Activated B cell treated with CpG ODN at 0.5 μM for 24 hours (primary cell): ENCODE measurements at regions of chr12 and their contacts with region 1.

Region 1: DNA sequence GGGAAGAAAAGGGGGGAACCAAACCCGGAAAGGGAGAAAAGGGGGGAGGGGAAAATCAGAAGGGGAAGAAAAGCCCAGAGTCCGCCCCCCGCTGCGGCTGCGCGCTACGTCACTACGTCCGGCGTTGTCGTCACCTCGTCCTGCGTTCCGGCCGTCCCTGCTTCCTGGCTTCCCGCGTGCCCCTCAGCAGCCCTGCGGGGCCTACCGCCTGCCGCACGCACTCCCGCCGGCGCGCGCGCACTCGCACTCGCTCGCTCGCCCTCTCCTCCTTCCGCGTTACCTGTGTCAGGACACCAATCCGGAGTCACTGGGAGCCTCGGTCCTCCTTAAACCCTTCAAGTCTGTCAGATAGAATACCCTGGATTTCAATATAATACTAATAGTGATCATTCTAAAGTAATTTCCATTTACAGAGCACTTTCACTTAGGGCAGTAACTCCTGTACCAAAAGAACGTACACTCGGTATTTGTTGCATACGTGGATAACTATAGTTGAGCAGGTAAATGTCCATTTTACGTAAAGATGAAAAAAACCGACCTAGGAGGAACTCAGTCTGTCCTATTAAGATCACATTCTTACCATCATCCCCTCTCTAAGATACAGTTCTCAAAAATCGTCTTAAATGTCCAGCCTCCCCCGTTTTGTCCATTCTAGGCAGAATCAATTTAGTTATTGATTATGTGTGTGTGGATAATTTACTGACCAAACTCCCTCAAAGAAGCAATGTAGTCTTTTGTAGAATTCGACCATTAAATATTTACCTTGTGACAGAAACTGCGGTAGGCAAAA is at the start of gene R3HDM2:
- DNase-seq: peak; percentile 94
- ATAC-seq: peak; percentile 91
- H3K4me3 Mint-ChIP-seq: peak within 1 kb of the TSS; percentile 97
- H3K27ac Mint-ChIP-seq: peak within 1 kb of the TSS; percentile 99
- H3K4me1 Mint-ChIP-seq: peaks cover 39% of the 10 kb centered on the region
- H3K27me3 Mint-ChIP-seq: no peaks in the 10 kb centered on the region
- CTCF ChIP-seq: no peak
- total RNA-seq, gene R3HDM2: 74.2 and 75.6 TPM in 2 replicates

Region 2: GRCh38 chr12:56488041-56488955 is 942.8 kb before region 1 on chr12 and contains the start of gene GLS2:
- CTCF ChIA-PET with region 1: no interaction called
- POLR2A ChIA-PET with region 1: no interaction called
- intact Hi-C with region 1: no loop called
- DNase-seq: peak; percentile 67
- ATAC-seq: peak; percentile 99
- H3K4me3 Mint-ChIP-seq: peak within 1 kb of the TSS; percentile 92
- H3K27ac Mint-ChIP-seq: peak within 1 kb of the TSS; percentile 81
- H3K4me1 Mint-ChIP-seq: peaks cover 17% of the 10 kb centered on the region
- H3K27me3 Mint-ChIP-seq: peaks cover 13% of the 10 kb centered on the region
- CTCF ChIP-seq: no peak
- total RNA-seq, gene GLS2: 2.6 and 3.5 TPM in 2 replicates

Region 3: GRCh38 chr12:57088459-57089248 is 342.5 kb before region 1 on chr12 and contains the start of gene NAB2:
- CTCF ChIA-PET with region 1: no interaction called
- POLR2A ChIA-PET with region 1: no interaction called
- intact Hi-C with region 1: loop called (anchors 2 kb)
- DNase-seq: peak; percentile 89
- ATAC-seq: peak; percentile 66
- H3K4me3 Mint-ChIP-seq: peak within 1 kb of the TSS; percentile 91
- H3K27ac Mint-ChIP-seq: peak within 1 kb of the TSS; percentile 96
- H3K4me1 Mint-ChIP-seq: peaks cover 55% of the 10 kb centered on the region
- H3K27me3 Mint-ChIP-seq: no peaks in the 10 kb centered on the region
- CTCF ChIP-seq: no peak
- total RNA-seq, gene NAB2: 20.4 and 22.1 TPM in 2 replicates

Region 4: DNA sequence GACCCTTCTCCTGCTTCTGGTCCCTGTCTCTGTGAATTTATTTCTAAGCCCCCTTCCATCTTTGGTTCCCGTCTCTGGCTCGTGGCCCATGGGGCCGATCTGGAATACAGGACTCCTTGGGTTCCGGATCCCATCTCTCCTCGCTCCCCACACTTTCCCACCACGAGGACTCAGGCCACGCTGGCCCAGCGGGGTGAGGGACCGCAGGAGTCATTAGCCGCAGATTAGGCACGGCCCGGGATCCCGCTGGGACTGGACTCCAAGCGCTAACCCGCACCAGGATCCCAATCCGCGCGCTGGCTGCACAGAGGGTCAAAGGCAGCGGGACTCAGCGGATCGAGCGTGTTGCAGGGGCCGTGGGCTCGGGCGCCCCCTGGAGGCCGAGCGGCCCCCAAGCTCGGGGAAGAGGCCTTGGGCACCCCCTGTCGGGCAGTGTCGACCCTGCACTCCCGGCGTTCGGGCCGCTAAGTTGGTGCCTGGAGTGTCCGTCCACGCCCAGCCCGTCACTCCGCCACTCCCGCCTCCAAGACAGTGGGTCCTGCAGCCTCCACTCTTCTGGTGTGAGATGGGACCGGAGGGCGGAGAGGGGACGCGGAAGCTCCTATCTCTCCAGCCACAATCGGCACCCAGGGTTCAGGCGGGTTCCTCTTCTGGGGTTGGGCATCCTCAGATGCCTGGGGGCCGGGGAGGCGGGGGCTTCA is 192.1 kb before region 1 on chr12:
- CTCF ChIA-PET with region 1: no interaction called
- POLR2A ChIA-PET with region 1: no interaction called
- intact Hi-C with region 1: loop called (anchors 1 kb)
- DNase-seq: peak; percentile 96
- ATAC-seq: peak; percentile 54
- H3K4me3 Mint-ChIP-seq: peak overlapping the region; percentile 89
- H3K27ac Mint-ChIP-seq: peak overlapping the region; percentile 90
- H3K4me1 Mint-ChIP-seq: peaks cover 94% of the 10 kb centered on the region
- H3K27me3 Mint-ChIP-seq: peaks cover 8% of the 10 kb centered on the region
- CTCF ChIP-seq: peak; percentile 99

Region 5: GRCh38 chr12:57280211-57281062 is 150.7 kb before region 1 on chr12:
- CTCF ChIA-PET with region 1: no interaction called
- POLR2A ChIA-PET with region 1: interaction called, 3 read pairs
- intact Hi-C with region 1: loop called (anchors 1 kb)
- DNase-seq: peak; percentile 47
- ATAC-seq: peak; percentile 94
- H3K4me3 Mint-ChIP-seq: peak overlapping the region; percentile 71
- H3K27ac Mint-ChIP-seq: peak overlapping the region; percentile 95
- H3K4me1 Mint-ChIP-seq: peaks cover 29% of the 10 kb centered on the region
- H3K27me3 Mint-ChIP-seq: no peaks in the 10 kb centered on the region
- CTCF ChIP-seq: no peak

Region 6: DNA sequence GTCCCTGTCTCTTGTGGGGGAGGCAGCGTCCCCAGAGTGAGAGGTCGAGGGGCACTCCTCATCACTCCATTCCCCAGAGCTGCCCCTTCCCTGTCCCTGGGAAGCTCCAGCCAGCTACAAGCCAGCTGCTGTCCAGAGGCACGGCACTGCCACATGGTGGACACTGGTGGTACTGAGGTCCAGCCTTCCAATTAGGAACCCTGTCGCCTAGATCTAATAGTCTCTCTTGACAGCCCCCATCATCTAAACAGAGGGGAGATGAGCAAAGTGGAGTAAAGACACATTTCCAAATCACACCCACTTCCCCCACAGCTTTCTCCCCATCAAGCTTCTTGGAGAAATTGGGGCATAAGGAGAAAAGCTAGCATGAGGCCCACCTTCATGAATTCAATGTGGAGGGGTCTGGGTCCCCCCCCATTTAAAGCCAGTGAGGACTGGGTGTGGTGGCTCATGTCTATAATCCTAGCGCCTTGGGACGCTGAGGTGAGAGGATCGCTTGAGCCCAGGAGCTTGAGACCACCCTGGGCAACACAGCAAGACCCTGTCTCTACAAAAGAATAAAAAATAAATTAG is 21.9 kb after region 1 on chr12:
- CTCF ChIA-PET with region 1: interaction called, 16 read pairs
- POLR2A ChIA-PET with region 1: interaction called, 15 read pairs
- intact Hi-C with region 1: no loop called
- DNase-seq: peak; percentile 45
- ATAC-seq: peak; percentile 71
- H3K4me3 Mint-ChIP-seq: no peak overlapping the region
- H3K27ac Mint-ChIP-seq: no peak overlapping the region
- H3K4me1 Mint-ChIP-seq: peaks cover 12% of the 10 kb centered on the region
- H3K27me3 Mint-ChIP-seq: no peaks in the 10 kb centered on the region
- CTCF ChIP-seq: no peak

Region 7: GRCh38 chr12:57476162-57476992 is 45.3 kb after region 1 on chr12:
- CTCF ChIA-PET with region 1: no interaction called
- POLR2A ChIA-PET with region 1: interaction called, 8 read pairs
- intact Hi-C with region 1: loop called (anchors 2 kb)
- DNase-seq: peak; percentile 54
- ATAC-seq: peak; percentile 38
- H3K4me3 Mint-ChIP-seq: peak overlapping the region; percentile 93
- H3K27ac Mint-ChIP-seq: peak overlapping the region; percentile 100
- H3K4me1 Mint-ChIP-seq: peaks cover 80% of the 10 kb centered on the region
- H3K27me3 Mint-ChIP-seq: no peaks in the 10 kb centered on the region
- CTCF ChIP-seq: no peak

Region 8: GRCh38 chr12:57693659-57694458 is 262.7 kb after region 1 on chr12 and contains the start of gene OS9:
- CTCF ChIA-PET with region 1: no interaction called
- POLR2A ChIA-PET with region 1: no interaction called
- intact Hi-C with region 1: loop called (anchors 1 kb)
- DNase-seq: peak; percentile 73
- ATAC-seq: peak; percentile 91
- H3K4me3 Mint-ChIP-seq: no peak within 1 kb of the TSS
- H3K27ac Mint-ChIP-seq: no peak within 1 kb of the TSS
- H3K4me1 Mint-ChIP-seq: peaks cover 2% of the 10 kb centered on the region
- H3K27me3 Mint-ChIP-seq: peaks cover 8% of the 10 kb centered on the region
- CTCF ChIP-seq: no peak
- total RNA-seq, gene OS9: 166 TPM in 2 replicates